ENCODE measurements at regions of chr16 and their contacts with region 1.

Region 1: DNA sequence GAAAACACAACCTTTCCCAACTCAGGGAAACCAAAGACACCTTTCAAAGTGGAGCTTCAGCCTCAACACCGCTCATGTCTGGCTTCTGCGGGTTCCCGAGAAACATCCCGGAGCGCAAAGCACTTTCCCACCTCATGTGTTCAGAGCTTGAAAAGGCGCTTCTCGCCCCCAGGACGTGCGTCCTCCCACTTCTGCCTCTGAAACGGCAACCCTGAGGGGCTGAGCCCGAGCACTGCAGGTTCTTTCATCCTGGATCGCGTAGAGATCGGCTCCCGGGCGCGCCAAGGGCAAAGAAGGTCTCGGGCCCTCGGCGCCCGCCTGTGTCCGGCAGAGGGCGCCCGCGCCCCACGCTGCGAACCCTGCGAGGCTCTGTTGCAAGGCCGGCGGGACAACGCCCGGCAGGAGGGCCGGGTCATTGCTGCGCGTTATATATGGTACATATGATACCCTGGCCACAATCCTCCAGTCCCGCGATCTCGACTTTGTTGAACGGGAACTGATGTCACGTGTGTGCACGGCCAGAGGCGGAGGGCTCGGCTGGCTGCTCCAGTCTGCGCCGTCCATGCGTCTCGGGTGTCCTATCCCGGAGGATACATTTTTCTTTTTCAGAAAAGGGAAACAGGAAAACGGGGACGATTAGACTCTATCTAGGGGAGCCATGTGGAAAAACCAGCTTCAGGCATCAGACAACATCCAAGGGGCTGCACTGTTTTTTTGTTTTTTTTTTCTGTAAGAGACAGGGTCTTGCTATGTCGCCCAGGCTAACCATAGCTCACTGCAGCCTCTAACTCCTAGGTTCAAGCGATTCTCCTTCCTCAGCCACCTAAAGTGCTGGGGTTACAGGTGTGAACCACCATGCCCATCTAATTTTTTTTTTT is 19.1 kb downstream of the COQ7 start:
- DNase-seq: peak; percentile 90
- H3K4me3 ChIP-seq: peak overlapping the region; percentile 20 to 49 (median 38)
- H3K27ac ChIP-seq: peak overlapping the region; percentile 49 to 77 (median 72)
- H3K4me1 ChIP-seq: peaks cover 4 to 19% (median 13%) of the 10 kb centered on the region in 4 donors
- H3K27me3 ChIP-seq: no peaks in the 10 kb centered on the region
- CTCF ChIP-seq: peak; percentile 97 to 100 (median 99)
- EP300 ChIP-seq: no peak
- POLR2A ChIP-seq: peak; percentile 31

Region 2: GRCh38 chr16:19179546-19180490 is 93.3 kb after region 1 on chr16:
- in situ Hi-C with region 1: loop called in 1 of 4 experiments (anchors 10 kb)
- intact Hi-C with region 1: no loop called
- DNase-seq: peak; percentile 78
- H3K4me3 ChIP-seq: no peak overlapping the region
- H3K27ac ChIP-seq: no peak overlapping the region
- H3K4me1 ChIP-seq: no peaks in the 10 kb centered on the region
- H3K27me3 ChIP-seq: no peaks in the 10 kb centered on the region
- CTCF ChIP-seq: peak; percentile 67 to 80 (median 74)
- EP300 ChIP-seq: no peak
- POLR2A ChIP-seq: no peak

Region 3: GRCh38 chr16:19366391-19366790 is 279.8 kb after region 1 on chr16:
- in situ Hi-C with region 1: loop called in 3 of 4 experiments (anchors 5 to 10 kb)
- intact Hi-C with region 1: no loop called
- DNase-seq: no peak
- H3K4me3 ChIP-seq: no peak overlapping the region
- H3K27ac ChIP-seq: no peak overlapping the region
- H3K4me1 ChIP-seq: no peaks in the 10 kb centered on the region
- H3K27me3 ChIP-seq: no peaks in the 10 kb centered on the region
- CTCF ChIP-seq: no peak
- EP300 ChIP-seq: no peak
- POLR2A ChIP-seq: no peak

Region 4: GRCh38 chr16:19375561-19376158 is 289.1 kb after region 1 on chr16:
- in situ Hi-C with region 1: loop called in 3 of 4 experiments (anchors 5 to 10 kb)
- intact Hi-C with region 1: loop called (anchors 1 kb)
- DNase-seq: peak; percentile 40
- H3K4me3 ChIP-seq: no peak overlapping the region
- H3K27ac ChIP-seq: no peak overlapping the region
- H3K4me1 ChIP-seq: peaks cover 0 to 7% (median 0%) of the 10 kb centered on the region in 4 donors
- H3K27me3 ChIP-seq: no peaks in the 10 kb centered on the region
- CTCF ChIP-seq: peak; percentile 84 to 90 (median 88)
- EP300 ChIP-seq: no peak
- POLR2A ChIP-seq: no peak

Region 5: GRCh38 chr16:19488213-19488640 is 401.7 kb after region 1 on chr16:
- in situ Hi-C with region 1: loop called in 1 of 4 experiments (anchors 25 kb)
- intact Hi-C with region 1: no loop called
- DNase-seq: peak; percentile 84
- H3K4me3 ChIP-seq: no peak overlapping the region
- H3K27ac ChIP-seq: peak overlapping the region; percentile 60 to 79 (median 74)
- H3K4me1 ChIP-seq: peaks cover 0 to 21% (median 12%) of the 10 kb centered on the region in 4 donors
- H3K27me3 ChIP-seq: no peaks in the 10 kb centered on the region
- CTCF ChIP-seq: no peak
- EP300 ChIP-seq: no peak
- POLR2A ChIP-seq: no peak

Region 6: DNA sequence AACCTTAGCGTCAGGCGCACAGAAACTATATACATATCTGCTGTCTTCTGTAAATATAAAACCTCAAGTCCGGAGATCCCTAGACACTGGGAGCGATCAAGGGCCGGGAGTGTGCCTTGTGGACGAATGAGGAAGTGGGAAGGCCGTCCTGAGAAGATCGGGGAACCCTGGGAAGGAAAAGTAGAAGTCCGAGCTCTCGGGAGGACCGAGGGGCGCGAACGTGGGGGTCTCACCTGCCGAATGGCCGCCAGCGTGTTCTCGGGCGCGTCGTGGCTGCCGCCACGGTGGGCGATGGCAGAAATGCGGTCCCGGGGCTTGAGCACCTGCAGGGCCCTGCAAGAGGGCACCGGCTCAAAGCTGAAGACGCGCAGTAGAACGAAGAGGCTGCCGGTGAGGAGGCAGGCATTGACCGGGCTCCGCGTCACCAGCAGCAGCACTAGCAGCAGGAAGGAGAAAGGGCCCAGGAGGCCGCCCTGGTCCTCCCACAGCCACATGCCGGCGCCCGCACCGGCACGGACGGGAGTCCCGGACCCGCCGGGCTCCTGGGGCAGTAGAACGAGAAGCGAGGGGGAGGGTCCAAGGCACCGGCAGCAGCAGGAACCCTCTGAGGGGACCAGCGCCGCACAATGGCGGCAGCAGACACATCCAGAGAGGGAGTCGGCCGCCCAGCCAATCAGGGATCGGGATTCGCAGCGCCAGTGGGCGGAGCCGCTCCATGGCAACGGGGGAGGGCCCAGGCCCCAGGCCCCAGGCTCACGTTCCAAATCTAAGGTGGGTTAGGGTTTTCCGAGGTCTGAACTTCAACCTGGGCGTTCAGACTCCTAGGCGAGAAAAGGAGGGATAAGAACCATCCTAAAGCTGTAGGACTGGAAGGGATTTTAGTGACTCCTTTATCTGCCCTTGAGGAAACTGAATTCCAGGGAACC is 435.2 kb after region 1 on chr16 and contains the start of gene GDE1:
- in situ Hi-C with region 1: loop called in 2 of 4 experiments (anchors 25 kb)
- intact Hi-C with region 1: no loop called
- DNase-seq: peak; percentile 97
- H3K4me3 ChIP-seq: peak within 1 kb of the TSS; percentile 70 to 95 (median 85)
- H3K27ac ChIP-seq: peak within 1 kb of the TSS; percentile 96 to 99 (median 98)
- H3K4me1 ChIP-seq: peaks cover 14 to 71% (median 42%) of the 10 kb centered on the region in 4 donors
- H3K27me3 ChIP-seq: no peaks in the 10 kb centered on the region
- CTCF ChIP-seq: peak in 4 of 5 experiments; percentile 13 to 41 (median 28)
- EP300 ChIP-seq: no peak
- POLR2A ChIP-seq: peak; percentile 94
- total RNA-seq, gene GDE1: 47.5 to 120 (median 96.8) TPM

Measured in transverse colon (tissue), 4 donors.